H1 (cell line): ENCODE measurements at regions of chr21 and their contacts with region 1.

Region 1: GRCh38 chr21:25350056-25350455 is 257.2 kb downstream of the MRPL39 start:
- DNase-seq: peak in 1 of 2 experiments; percentile 68
- H3K4me3 ChIP-seq: no peak overlapping the region
- H3K27ac ChIP-seq: no peak overlapping the region
- H3K4me1 ChIP-seq: no peaks in the 10 kb centered on the region
- H3K27me3 ChIP-seq: no peaks in the 10 kb centered on the region
- CTCF ChIP-seq: peak; percentile 59 to 75 (median 65)
- EP300 ChIP-seq: no peak
- POLR2A ChIP-seq: no peak
- RAD21 ChIP-seq: peak; percentile 54 to 70

Region 2: GRCh38 chr21:25283720-25284119 is 66.3 kb before region 1 on chr21:
- CTCF ChIA-PET with region 1: interaction called, 10 read pairs
- POLR2A ChIA-PET with region 1: no interaction called
- DNase-seq: no peak
- H3K4me3 ChIP-seq: no peak overlapping the region
- H3K27ac ChIP-seq: no peak overlapping the region
- H3K4me1 ChIP-seq: peaks cover 0 to 3% (median 0%) of the 10 kb centered on the region in 4 experiments; a peak in 1 of 7 replicates
- H3K27me3 ChIP-seq: no peaks in the 10 kb centered on the region
- CTCF ChIP-seq: peak in 2 of 3 experiments; percentile 20 to 40; a peak in 2 of 4 replicates
- EP300 ChIP-seq: no peak
- POLR2A ChIP-seq: no peak
- RAD21 ChIP-seq: peak; percentile 55 to 58; a peak in 3 of 4 replicates

Region 3: DNA sequence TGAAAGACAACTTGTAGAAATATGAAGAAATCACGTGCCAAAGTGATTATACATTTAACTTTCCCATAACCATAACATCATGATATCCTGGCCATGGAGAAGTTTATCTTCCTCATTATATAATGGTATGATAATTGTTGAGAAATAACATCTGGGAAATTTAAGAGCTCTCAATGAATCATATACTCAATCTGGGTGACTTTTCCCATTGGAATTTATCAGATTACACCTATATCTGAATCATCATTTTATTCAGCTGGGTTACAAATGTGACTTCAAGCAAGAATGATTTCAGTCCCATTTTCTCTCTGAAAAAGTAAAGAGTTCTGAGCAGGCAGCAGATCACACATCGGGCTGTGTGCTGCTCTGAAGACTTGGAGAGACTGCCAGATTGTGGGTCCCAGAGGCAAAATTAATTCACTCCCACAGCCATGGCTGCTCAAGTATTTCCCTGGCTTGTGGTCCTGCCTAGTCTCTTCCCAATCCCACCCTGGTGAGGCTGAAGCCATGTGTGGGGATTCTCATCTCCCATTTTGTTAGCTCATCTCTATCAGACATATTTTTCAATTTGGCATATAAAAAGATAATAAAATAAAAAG is 20.7 kb before region 1 on chr21:
- CTCF ChIA-PET with region 1: interaction called, 13 read pairs
- POLR2A ChIA-PET with region 1: interaction called, 3 read pairs
- DNase-seq: no peak
- H3K4me3 ChIP-seq: no peak overlapping the region
- H3K27ac ChIP-seq: no peak overlapping the region
- H3K4me1 ChIP-seq: peaks cover 0 to 5% (median 2%) of the 10 kb centered on the region in 4 experiments; a peak in 2 of 7 replicates
- H3K27me3 ChIP-seq: peaks cover 0 to 1% (median 0%) of the 10 kb centered on the region in 4 experiments; a peak in 1 of 7 replicates
- CTCF ChIP-seq: no peak
- EP300 ChIP-seq: no peak
- POLR2A ChIP-seq: no peak
- RAD21 ChIP-seq: no peak

Region 4: GRCh38 chr21:25360593-25360992 is 10.5 kb after region 1 on chr21:
- CTCF ChIA-PET with region 1: interaction called, 32 read pairs
- POLR2A ChIA-PET with region 1: interaction called, 3 read pairs
- DNase-seq: no peak
- H3K4me3 ChIP-seq: no peak overlapping the region
- H3K27ac ChIP-seq: no peak overlapping the region
- H3K4me1 ChIP-seq: no peaks in the 10 kb centered on the region
- H3K27me3 ChIP-seq: no peaks in the 10 kb centered on the region
- CTCF ChIP-seq: peak in 2 of 3 experiments; percentile 4 to 37; a peak in 2 of 4 replicates
- EP300 ChIP-seq: no peak
- POLR2A ChIP-seq: no peak
- RAD21 ChIP-seq: peak; percentile 9 to 15; a peak in 1 of 4 replicates

Region 5: GRCh38 chr21:25385911-25386474 is 35.9 kb after region 1 on chr21:
- CTCF ChIA-PET with region 1: interaction called, 40 read pairs
- POLR2A ChIA-PET with region 1: interaction called, 3 read pairs
- DNase-seq: no peak
- H3K4me3 ChIP-seq: no peak overlapping the region
- H3K27ac ChIP-seq: no peak overlapping the region
- H3K4me1 ChIP-seq: peaks cover 0 to 3% (median 0%) of the 10 kb centered on the region in 4 experiments; a peak in 2 of 7 replicates
- H3K27me3 ChIP-seq: no peaks in the 10 kb centered on the region
- CTCF ChIP-seq: peak in 2 of 3 experiments; percentile 58 to 59; a peak in 2 of 4 replicates
- EP300 ChIP-seq: no peak
- POLR2A ChIP-seq: no peak
- RAD21 ChIP-seq: peak; percentile 81 to 87